Naive thymus-derived CD4-positive, alpha-beta T cell (primary cell): ENCODE measurements at regions of chr5 and their contacts with region 1.

Region 1: GRCh38 chr5:56610093-56610698 is 205.2 kb upstream of the MAP3K1 start:
- DNase-seq: peak in 1 of 9 donors; percentile 29
- ATAC-seq: peak; percentile 41
- H3K4me3 ChIP-seq: no peak overlapping the region
- H3K4me3 Mint-ChIP-seq: peak overlapping the region in 7 of 10 donors; percentile 12 to 80 (median 39)
- H3K27ac ChIP-seq: no peak overlapping the region
- H3K27ac Mint-ChIP-seq: peak overlapping the region in 8 of 9 donors; percentile 3 to 79 (median 74)
- H3K4me1 ChIP-seq: peaks cover 20 to 58% of the 10 kb centered on the region in 2 donors
- H3K4me1 Mint-ChIP-seq: peaks cover 56 to 93% (median 89%) of the 10 kb centered on the region in 7 donors
- H3K27me3 ChIP-seq: no peaks in the 10 kb centered on the region
- H3K27me3 Mint-ChIP-seq: no peaks in the 10 kb centered on the region

Region 2: GRCh38 chr5:56552612-56553268 is 57.5 kb before region 1 on chr5:
- CTCF ChIA-PET with region 1: no interaction called
- POLR2A ChIA-PET with region 1: no interaction called
- intact Hi-C with region 1: no loop called
- DNase-seq: no peak
- ATAC-seq: no peak
- H3K4me3 ChIP-seq: no peak overlapping the region
- H3K4me3 Mint-ChIP-seq: no peak overlapping the region
- H3K27ac ChIP-seq: no peak overlapping the region
- H3K27ac Mint-ChIP-seq: no peak overlapping the region
- H3K4me1 ChIP-seq: no peaks in the 10 kb centered on the region
- H3K4me1 Mint-ChIP-seq: peaks cover 0 to 9% (median 4%) of the 10 kb centered on the region in 7 donors
- H3K27me3 ChIP-seq: no peaks in the 10 kb centered on the region
- H3K27me3 Mint-ChIP-seq: peaks cover 0 to 8% (median 0%) of the 10 kb centered on the region in 5 donors

Region 3: GRCh38 chr5:56598941-56599340 is 11.3 kb before region 1 on chr5:
- CTCF ChIA-PET with region 1: no interaction called
- POLR2A ChIA-PET with region 1: interaction called, 6 read pairs
- intact Hi-C with region 1: loop called in 1 of 2 experiments (anchors 2 kb)
- DNase-seq: no peak
- ATAC-seq: no peak
- H3K4me3 ChIP-seq: no peak overlapping the region
- H3K4me3 Mint-ChIP-seq: no peak overlapping the region
- H3K27ac ChIP-seq: no peak overlapping the region
- H3K27ac Mint-ChIP-seq: peak overlapping the region in 2 of 9 donors; percentile 9 to 41
- H3K4me1 ChIP-seq: no peaks in the 10 kb centered on the region
- H3K4me1 Mint-ChIP-seq: peaks cover 8 to 58% (median 51%) of the 10 kb centered on the region in 7 donors
- H3K27me3 ChIP-seq: no peaks in the 10 kb centered on the region
- H3K27me3 Mint-ChIP-seq: peaks cover 0 to 6% (median 0%) of the 10 kb centered on the region in 5 donors

Region 4: DNA sequence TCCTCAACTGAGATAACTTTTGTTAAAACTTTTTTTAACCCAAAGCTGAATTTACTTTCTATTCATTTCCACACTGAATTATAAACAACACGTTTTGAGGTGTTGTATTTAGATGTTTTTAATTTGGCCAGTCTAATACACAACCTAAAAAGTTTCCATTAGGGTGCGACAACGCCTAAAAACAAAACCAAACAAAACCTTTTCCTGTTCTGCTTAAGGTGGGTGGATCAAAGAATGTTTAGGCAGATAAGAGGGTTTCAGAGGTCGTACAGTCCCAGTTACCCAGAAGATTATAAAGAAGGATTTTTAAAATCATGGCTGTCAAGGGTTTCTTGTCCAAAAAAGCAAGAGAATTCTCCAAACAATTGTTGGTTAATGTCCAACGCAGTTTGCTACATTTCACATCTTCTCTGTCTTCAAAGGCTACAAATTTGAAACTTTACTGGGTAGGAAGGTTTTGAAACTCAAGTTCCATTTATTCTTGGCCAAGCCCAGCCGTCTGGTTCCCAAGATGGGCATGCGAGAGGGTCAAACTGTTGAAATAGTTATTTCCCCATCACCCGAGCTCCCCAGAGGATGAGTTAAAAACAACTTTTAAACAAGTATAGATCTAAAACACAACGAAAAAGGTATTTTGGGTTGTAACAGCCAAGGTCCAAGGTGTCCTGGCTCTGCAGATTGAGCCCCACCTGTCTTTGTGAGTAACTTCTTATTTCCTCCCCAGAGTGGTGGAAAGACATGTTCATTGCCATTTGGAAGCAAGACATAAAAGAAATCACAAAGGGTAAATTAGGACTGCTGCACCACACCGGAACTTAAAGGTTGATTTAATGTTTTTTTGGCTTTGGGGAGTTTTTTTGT is 82.4 kb after region 1 on chr5:
- CTCF ChIA-PET with region 1: no interaction called
- POLR2A ChIA-PET with region 1: no interaction called
- intact Hi-C with region 1: loop called in 1 of 2 experiments (anchors 5 kb)
- DNase-seq: peak in 4 of 9 donors; percentile 18 to 47 (median 35)
- ATAC-seq: peak; percentile 53
- H3K4me3 ChIP-seq: peak overlapping the region; percentile 37
- H3K4me3 Mint-ChIP-seq: peak overlapping the region; percentile 55 to 89 (median 75)
- H3K27ac ChIP-seq: peak overlapping the region; percentile 62
- H3K27ac Mint-ChIP-seq: peak overlapping the region; percentile 79 to 98 (median 89)
- H3K4me1 ChIP-seq: peaks cover 24 to 64% of the 10 kb centered on the region in 2 donors
- H3K4me1 Mint-ChIP-seq: peaks cover 61 to 99% (median 89%) of the 10 kb centered on the region in 7 donors
- H3K27me3 ChIP-seq: no peaks in the 10 kb centered on the region
- H3K27me3 Mint-ChIP-seq: peaks cover 0 to 2% (median 0%) of the 10 kb centered on the region in 5 donors